ENCODE measurements at regions of chr12 and their contacts with region 1.

Region 1: GRCh38 chr12:40946612-40947194 is 241.4 kb upstream of the PDZRN4 start:
- DNase-seq: no peak
- H3K4me3 ChIP-seq: no peak overlapping the region
- H3K27ac ChIP-seq: no peak overlapping the region
- H3K4me1 ChIP-seq: no peaks in the 10 kb centered on the region
- H3K27me3 ChIP-seq: no peaks in the 10 kb centered on the region
- CTCF ChIP-seq: peak; percentile 81

Region 2: DNA sequence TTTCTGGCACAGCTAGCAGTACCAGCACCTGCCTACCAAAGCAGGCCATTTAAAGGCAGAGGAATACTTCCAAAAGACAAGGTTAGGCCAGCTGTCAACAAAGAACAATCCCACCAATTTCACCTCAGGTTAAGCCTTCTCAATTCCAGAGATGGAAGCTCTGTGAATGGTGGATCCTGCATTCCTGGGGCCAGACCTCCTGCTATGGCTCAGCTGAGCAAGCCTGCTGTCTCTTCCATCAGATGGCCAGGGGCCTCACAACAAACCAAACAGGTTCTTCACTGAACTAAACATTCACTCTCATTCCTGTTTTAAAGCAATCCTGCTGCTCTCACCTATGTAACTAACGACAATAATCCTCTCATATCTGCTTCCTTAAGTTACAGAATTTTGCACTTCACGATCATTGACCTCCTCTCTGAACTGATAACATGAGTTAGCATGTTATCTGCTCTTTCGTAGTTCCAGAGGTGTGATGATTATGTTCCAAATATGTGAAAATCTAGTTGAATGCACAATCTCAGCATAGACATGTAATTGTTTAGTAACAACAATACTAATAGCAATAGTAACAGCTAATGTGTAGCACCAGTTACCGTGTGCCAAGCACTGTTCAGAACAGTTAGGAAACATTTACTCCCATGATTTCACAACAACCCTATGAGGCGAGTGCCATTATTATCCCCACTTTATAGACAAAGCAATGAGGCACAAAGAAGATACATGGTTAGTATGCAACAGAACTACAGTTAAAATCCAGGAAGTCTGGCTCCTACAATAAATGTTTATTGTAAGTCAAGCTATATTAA is 914.1 kb before region 1 on chr12:
- CTCF ChIA-PET with region 1: no interaction called
- POLR2A ChIA-PET with region 1: no interaction called
- intact Hi-C with region 1: no loop called
- DNase-seq: no peak
- H3K4me3 ChIP-seq: no peak overlapping the region
- H3K27ac ChIP-seq: no peak overlapping the region
- H3K4me1 ChIP-seq: no peaks in the 10 kb centered on the region
- H3K27me3 ChIP-seq: no peaks in the 10 kb centered on the region
- CTCF ChIP-seq: no peak

Region 3: DNA sequence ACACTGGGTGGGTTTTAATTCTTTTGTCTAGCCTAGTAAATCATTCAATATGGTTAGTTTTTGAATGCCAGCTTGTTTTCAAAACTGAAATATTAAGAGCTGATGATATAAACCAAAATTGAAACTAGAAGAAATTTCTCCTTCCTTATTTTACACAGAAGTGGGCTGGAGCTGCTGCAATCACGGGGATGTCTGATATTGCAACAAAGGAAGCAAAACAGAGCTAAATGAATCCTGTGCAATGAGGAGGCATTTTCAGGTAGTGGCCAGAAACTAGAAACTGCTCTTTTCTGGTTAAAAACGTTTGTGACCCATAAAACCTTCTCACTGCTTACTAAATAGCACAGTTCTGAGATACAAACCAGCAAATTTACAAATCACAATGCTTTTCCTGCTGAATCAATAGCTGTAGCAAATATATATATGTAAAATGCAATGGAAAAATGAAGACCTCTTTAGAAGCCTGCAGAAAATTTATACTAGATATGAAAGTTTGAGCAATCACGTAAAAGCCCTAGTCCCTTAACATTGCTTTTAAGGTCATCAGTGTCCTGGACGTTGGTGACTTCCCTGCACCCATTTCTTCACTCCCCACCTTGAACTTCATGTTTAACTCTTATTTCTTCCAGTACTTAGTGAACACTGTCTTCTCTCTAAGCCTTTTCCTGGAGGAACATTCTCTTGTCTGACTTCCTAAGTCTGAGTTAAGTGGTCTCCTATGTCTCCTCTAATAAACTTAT is 737.8 kb before region 1 on chr12:
- CTCF ChIA-PET with region 1: no interaction called
- POLR2A ChIA-PET with region 1: no interaction called
- intact Hi-C with region 1: no loop called
- DNase-seq: no peak
- H3K4me3 ChIP-seq: no peak overlapping the region
- H3K27ac ChIP-seq: no peak overlapping the region
- H3K4me1 ChIP-seq: no peaks in the 10 kb centered on the region
- H3K27me3 ChIP-seq: no peaks in the 10 kb centered on the region
- CTCF ChIP-seq: no peak

Region 4: DNA sequence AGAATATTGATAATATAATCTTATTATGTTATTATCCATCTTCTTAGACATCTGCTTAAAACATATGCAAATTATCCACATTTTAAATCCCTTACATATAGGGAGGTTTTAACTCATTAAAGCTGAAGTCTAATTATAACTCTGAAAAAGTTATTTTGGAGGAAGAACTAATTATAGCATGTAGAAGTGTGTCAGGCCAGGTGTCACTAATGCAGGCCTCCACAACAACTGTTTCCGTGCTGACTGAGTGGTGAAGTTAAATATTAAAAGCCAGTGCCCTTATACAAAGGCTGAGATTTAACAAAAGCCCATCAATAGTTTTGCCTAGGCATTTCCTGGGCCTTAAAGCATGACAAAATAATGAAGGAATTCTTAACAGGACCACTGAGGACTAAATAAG is 564.5 kb before region 1 on chr12:
- CTCF ChIA-PET with region 1: no interaction called
- POLR2A ChIA-PET with region 1: interaction called, 10 read pairs
- intact Hi-C with region 1: no loop called
- DNase-seq: no peak
- H3K4me3 ChIP-seq: no peak overlapping the region
- H3K27ac ChIP-seq: no peak overlapping the region
- H3K4me1 ChIP-seq: peaks cover 8% of the 10 kb centered on the region
- H3K27me3 ChIP-seq: no peaks in the 10 kb centered on the region
- CTCF ChIP-seq: no peak

Region 5: DNA sequence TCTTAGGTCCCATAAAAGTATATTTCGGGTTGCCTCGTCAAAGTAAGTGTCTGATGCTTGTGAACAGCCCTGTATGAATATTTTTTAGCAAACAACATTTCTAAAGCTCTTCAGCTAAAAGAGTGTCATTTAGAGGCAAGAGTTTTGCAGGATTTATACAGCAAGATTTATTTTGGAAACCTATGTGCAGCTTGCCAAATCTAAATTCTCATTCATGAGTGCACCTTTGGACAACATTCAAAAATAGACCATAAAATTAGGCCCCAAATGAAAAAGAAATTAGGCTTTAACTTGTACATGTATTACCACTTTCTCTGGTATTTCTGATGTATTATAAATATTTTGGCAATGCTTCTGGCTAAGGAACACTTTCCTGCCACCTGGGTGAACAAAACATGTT is 17.0 kb after region 1 on chr12:
- CTCF ChIA-PET with region 1: no interaction called
- POLR2A ChIA-PET with region 1: interaction called, 52 read pairs
- intact Hi-C with region 1: no loop called
- DNase-seq: no peak
- H3K4me3 ChIP-seq: no peak overlapping the region
- H3K27ac ChIP-seq: no peak overlapping the region
- H3K4me1 ChIP-seq: no peaks in the 10 kb centered on the region
- H3K27me3 ChIP-seq: no peaks in the 10 kb centered on the region
- CTCF ChIP-seq: no peak

Region 6: DNA sequence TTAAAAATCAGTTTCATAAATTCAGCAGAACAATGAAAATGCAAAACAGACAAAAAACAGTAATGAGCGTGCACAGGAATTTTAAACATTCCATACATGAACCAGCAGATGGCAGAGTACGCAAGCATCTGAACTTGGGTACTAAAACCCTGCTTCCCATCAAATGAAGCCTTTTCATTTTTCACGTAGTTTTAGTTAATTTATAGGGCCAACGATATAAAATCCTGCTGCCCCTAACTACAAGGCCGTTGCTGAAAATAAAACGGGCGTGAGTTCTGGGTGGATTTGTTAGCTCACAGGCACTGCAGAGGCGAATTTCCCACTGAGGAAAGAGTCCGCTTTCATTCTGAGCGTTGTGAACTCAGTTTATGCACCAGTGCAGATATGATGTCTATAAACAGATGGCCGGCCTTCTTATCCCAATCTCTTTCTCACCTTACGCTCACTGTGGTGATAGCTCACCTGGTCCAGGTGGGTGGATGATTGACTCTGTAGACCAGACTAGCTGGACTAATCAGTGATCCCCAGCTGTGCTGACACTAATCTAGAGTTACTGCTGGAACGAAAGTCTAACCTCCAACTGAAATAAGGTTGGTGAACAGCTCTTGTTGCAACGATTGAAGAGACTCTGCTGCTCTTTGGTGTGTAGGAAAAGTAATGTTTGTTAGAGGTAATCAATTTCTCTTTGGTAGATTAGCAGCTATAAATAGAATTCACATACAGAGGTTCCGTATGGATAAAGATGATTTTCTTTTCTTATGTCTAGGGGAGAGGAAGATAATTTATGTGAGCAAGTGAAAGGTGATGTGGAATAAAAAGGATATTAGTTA is 330.6 kb after region 1 on chr12:
- CTCF ChIA-PET with region 1: no interaction called
- POLR2A ChIA-PET with region 1: no interaction called
- intact Hi-C with region 1: loop called (anchors 10 kb)
- DNase-seq: peak in 1 of 2 experiments; percentile 11
- H3K4me3 ChIP-seq: no peak overlapping the region
- H3K27ac ChIP-seq: no peak overlapping the region
- H3K4me1 ChIP-seq: no peaks in the 10 kb centered on the region
- H3K27me3 ChIP-seq: no peaks in the 10 kb centered on the region
- CTCF ChIP-seq: peak; percentile 84

Region 7: GRCh38 chr12:41407232-41407799 is 460.6 kb after region 1 on chr12:
- CTCF ChIA-PET with region 1: no interaction called
- POLR2A ChIA-PET with region 1: no interaction called
- intact Hi-C with region 1: no loop called
- DNase-seq: no peak
- H3K4me3 ChIP-seq: no peak overlapping the region
- H3K27ac ChIP-seq: no peak overlapping the region
- H3K4me1 ChIP-seq: no peaks in the 10 kb centered on the region; the same call in 1 of the 2 replicates
- H3K27me3 ChIP-seq: no peaks in the 10 kb centered on the region
- CTCF ChIP-seq: no peak

Region 8: DNA sequence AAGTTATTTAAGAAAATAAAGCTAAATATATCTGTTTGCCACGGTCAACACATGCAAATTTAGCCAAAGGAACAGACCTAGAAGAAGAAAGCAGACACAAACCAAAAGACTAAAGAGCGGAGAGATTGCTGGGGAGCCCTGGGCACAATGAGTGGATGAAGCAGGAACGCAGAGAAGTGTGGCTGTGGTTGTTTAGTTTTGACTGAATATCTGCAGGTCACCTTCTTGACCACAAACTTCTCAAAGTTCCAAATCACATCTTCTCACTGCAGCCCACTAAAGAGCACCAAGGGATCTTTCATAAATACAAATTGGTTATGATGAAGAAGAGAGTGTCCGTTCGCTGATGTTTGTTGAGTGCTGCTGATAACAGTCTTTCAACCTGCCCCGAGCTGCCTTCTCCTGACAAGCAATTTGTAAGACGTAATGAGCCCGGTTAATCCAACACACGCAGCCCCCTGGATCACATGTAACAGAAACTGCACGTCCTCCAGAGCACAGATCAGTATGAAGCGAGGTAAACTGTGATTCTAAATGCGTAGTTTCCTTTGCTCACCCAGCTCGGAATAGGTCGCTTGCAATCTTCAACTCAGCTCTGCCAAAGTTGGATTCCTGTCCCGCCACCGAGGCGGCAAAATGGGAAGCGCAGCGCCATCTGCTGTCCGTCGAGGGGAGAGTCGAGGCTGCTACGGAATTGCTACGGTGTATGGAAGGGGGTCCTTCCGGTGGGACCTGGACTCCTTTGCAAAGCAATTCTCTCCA is 1077.2 kb after region 1 on chr12:
- CTCF ChIA-PET with region 1: no interaction called
- POLR2A ChIA-PET with region 1: no interaction called
- intact Hi-C with region 1: loop called (anchors 10 kb)
- DNase-seq: peak; percentile 37 to 64
- H3K4me3 ChIP-seq: no peak overlapping the region
- H3K27ac ChIP-seq: no peak overlapping the region
- H3K4me1 ChIP-seq: no peaks in the 10 kb centered on the region
- H3K27me3 ChIP-seq: no peaks in the 10 kb centered on the region
- CTCF ChIP-seq: peak; percentile 87

Region 9: DNA sequence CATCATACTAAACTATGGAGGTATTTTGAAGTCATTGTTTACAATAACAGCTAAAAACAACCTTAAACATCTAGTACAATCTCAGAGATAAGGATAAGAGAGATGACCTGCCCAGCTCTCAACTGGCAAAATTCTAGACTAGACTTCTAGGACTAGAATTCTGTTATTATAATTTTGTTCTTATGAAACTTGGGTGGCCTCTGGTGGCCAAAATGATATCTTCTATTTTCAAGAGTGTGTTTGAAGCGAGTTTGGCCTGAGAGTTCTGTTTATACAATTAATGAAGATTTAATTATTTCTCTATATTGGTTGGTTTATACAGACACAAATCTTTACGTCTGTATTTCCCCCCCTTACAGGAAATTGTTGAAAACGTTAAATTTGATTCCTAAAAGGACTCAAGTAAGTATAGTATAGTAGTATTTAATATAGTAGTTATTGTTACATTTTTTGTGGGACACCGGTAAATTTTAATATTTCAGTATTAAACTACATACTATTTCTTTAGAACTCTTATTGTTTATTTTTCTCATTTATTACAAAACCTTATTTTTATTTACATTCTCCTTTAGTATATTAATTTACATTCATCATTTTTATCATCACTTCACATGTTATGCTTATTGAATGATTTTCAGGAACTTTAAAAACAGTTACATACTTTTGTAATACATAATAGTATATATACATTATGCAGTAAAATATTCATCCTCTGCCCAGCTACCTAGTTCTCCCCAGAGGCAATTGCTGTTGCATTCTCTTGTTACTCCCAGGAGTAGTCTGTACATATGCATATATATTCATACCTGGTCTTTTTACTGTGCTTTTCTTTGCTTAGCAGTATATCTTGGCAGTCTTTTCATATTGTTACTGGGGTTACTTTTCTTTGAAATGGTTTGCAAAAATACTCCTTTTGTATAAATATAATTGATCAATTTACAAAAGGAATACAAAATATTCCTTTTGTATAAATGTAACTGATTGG is 1385.9 kb after region 1 on chr12:
- CTCF ChIA-PET with region 1: no interaction called
- POLR2A ChIA-PET with region 1: no interaction called
- intact Hi-C with region 1: loop called (anchors 5 kb)
- DNase-seq: peak in 1 of 2 experiments; percentile 8
- H3K4me3 ChIP-seq: no peak overlapping the region
- H3K27ac ChIP-seq: no peak overlapping the region
- H3K4me1 ChIP-seq: peaks cover 1% of the 10 kb centered on the region
- H3K27me3 ChIP-seq: no peaks in the 10 kb centered on the region
- CTCF ChIP-seq: peak; percentile 74

Measured in PC-9 (cell line).